Mammary epithelial cell (primary cell): ENCODE measurements at regions of chr5 and their contacts with region 1.

Region 1: GRCh38 chr5:115296124-115297022 is at the start of gene CCDC112:
- DNase-seq: peak; percentile 73
- H3K4me3 ChIP-seq: peak within 1 kb of the TSS; percentile 57 to 98 (median 81)
- H3K27ac ChIP-seq: peak within 1 kb of the TSS; percentile 40
- H3K4me1 ChIP-seq: peaks cover 5% of the 10 kb centered on the region
- H3K27me3 ChIP-seq: no peaks in the 10 kb centered on the region
- CTCF ChIP-seq: no peak
- total RNA-seq, gene CCDC112: 3.9 to 4.3 TPM

Region 2: DNA sequence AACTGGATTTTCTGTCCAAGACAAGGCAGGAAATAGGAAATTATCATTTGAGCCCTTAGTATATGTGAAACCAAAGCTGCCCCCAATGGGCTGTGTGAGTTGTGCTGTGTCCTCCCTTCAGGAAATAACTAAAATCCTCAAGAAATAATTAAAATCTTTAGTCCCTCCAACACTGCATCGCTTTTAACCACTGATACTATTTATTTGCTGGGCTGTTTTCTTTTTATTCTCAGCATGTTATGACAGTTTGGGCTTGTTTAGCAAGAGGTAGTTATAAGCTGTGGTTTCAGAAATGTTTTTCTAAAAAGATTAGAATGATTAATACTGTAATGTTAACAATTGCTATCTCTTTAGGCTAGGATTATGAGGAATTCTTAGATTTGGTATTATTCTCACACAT is 1121.5 kb before region 1 on chr5:
- CTCF ChIA-PET with region 1: no interaction called
- dilution Hi-C with region 1: no loop called
- in situ Hi-C with region 1: no loop called
- intact Hi-C with region 1: no loop called
- DNase-seq: no peak
- H3K4me3 ChIP-seq: no peak overlapping the region
- H3K27ac ChIP-seq: no peak overlapping the region
- H3K4me1 ChIP-seq: peaks cover 11% of the 10 kb centered on the region
- H3K27me3 ChIP-seq: no peaks in the 10 kb centered on the region
- CTCF ChIP-seq: no peak

Region 3: DNA sequence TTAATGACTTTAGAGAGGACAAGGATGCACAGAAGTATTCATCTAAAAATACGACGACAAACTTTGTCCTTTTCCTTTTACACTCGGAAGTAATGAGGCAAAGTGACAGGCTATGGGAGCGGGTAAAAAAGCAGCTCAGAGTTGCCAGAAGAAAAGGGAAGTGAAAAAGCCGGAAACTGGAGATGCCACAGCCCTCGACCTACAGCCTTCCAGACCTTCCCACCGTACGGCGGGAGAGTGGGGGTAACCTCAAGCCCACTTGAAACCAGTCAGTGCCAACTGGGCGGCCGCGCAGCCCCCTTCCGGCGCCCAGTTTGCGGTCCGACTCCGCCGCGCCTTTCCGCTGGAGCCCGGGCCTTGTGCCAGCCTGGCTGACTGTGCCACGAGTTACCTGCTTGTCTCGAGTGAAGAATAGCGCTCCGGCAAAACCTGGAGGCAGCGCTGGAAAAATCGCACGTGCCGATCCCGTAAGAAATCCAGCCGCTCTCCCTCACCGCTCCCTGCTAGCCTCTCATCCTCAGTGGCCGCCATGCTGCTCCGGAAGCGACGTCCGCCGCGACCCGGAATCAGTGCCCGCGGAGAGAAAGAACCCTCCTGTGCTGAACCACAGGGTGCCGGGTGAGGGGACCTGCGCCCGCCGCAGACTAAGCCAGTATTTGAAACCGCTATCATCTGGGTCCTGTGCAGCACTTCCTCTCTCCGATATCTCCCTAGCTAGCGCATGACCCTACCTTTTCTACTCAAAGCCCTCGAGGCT is 33.9 kb before region 1 on chr5 and contains the start of gene PGGT1B:
- CTCF ChIA-PET with region 1: interaction called, 5 read pairs
- dilution Hi-C with region 1: no loop called
- in situ Hi-C with region 1: no loop called
- intact Hi-C with region 1: loop called (anchors 1 kb)
- DNase-seq: peak; percentile 63
- H3K4me3 ChIP-seq: peak within 1 kb of the TSS; percentile 81 to 85 (median 83)
- H3K27ac ChIP-seq: peak within 1 kb of the TSS; percentile 85
- H3K4me1 ChIP-seq: peaks cover 25% of the 10 kb centered on the region
- H3K27me3 ChIP-seq: no peaks in the 10 kb centered on the region
- CTCF ChIP-seq: no peak
- total RNA-seq, gene PGGT1B: 22.7 to 41.5 TPM

Region 4: DNA sequence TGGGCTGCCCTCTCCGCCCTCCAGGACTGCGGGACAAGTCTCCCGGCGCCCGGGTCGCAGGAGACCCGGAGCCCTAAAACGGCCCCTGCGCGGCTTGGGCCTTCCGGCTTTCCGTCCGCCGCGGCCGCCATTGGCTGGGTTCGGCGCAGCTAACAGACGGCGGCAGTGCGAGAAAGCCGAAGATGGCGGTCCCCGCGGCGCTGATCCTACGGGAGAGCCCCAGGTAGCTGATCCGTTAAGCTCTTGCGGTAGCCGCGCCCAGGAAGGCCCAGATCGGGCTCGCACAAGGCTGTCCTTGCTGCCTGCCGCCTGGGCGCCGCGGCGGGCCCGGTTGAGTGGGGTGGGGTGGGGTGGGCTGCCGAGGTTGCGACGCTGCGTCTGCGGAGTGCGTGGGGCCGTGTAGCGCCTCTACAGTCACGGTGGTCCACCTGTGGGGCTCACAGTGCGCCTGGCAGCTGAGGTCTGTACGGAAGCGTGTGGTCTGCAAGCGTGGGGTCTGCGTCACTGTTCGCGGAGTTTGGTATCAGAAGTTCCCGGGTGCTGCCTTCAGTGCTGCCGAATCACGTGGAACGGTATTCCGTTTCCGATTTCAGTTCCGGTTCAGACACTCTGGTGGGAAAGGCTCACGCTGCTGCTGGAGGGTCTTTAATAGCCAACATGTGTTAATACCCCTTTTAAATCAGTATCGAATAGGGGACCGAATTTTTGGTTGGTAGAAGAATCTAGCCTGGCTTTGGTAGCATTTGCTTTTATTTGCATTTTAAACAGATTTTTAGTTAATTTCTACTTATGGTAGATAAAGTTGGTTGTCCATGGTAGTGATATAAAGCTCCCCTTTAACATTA is 788.7 kb after region 1 on chr5 and contains the start of gene COMMD10:
- CTCF ChIA-PET with region 1: no interaction called
- dilution Hi-C with region 1: no loop called
- in situ Hi-C with region 1: no loop called
- intact Hi-C with region 1: loop called (anchors 10 kb)
- DNase-seq: peak; percentile 69
- H3K4me3 ChIP-seq: peak within 1 kb of the TSS; percentile 82 to 98 (median 86)
- H3K27ac ChIP-seq: peak within 1 kb of the TSS; percentile 66
- H3K4me1 ChIP-seq: peaks cover 8% of the 10 kb centered on the region
- H3K27me3 ChIP-seq: no peaks in the 10 kb centered on the region
- CTCF ChIP-seq: no peak
- total RNA-seq, gene COMMD10: 17.0 to 26.7 TPM